ENCODE measurements at regions of chr5 and their contacts with region 1.

Region 1: DNA sequence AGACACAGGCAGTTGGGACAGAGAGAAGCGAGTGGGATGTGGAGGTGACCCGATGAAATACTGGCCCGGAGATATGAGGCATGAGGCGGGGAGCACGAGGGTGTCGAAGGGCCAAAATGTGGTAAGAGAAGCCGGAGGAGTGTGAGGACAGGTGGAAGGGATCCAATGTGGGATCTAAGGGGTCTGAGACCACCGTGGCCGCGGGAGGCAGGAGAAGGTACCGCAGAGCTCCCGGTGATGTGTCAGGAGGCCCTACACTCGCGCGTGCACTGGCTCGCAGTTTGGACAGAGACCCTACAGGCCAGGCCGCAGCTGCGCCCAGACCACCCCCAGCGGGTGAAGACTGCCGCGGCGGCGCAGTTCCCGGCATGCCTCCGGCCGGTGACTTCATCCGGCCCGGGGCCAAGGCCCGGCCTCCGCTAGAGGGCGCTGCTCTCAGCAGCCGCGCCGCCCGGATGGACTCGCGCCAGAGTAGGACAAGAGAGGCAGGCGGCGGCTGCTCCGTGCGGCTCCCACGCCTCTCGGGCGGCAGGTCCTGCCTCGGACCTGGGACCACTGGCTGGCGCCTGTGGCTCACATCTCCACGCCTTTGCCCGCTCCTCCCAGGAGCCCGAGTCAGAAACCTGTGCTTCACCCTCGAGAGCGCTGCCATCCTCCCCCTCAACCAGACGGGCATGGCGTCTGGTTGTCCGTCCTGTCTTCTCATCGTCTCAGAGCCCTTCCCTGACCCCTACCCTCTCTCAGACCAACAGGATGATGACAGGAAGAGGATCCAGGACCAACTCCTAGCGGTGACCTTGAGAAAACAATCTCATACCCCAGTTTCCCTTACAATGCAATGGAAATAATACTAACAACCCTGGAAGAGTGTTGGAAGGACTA is 35.4 kb upstream of the STING1 start:
- DNase-seq: no peak
- H3K4me3 ChIP-seq: peak overlapping the region; percentile 64
- CTCF ChIP-seq: peak; percentile 94

Region 2: DNA sequence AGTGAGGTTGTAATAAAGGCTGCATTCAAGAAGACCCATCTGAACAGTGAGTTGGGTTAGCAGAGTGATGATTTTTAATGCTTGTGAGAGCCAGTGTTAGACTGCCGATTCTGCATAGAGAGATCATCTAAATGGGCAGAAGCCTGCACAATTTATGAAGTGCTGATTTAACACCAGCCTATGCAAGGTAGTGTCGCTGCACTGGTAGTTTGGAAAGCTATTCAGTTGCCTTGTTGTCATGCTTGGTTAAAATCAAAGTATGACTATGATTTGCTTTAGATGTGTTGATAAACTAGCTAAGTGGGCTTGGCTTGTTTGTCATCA is 642.4 kb before region 1 on chr5:
- CTCF ChIA-PET with region 1: no interaction called
- POLR2A ChIA-PET with region 1: no interaction called
- DNase-seq: no peak
- H3K4me3 ChIP-seq: peak overlapping the region; percentile 53
- CTCF ChIP-seq: no peak

Region 3: GRCh38 chr5:139415221-139415861 is 102.6 kb before region 1 on chr5:
- CTCF ChIA-PET with region 1: interaction called, 730 read pairs
- POLR2A ChIA-PET with region 1: interaction called, 4 read pairs
- DNase-seq: no peak
- H3K4me3 ChIP-seq: no peak overlapping the region
- CTCF ChIP-seq: no peak

Region 4: GRCh38 chr5:139430015-139430414 is 87.9 kb before region 1 on chr5:
- CTCF ChIA-PET with region 1: interaction called, 730 read pairs
- POLR2A ChIA-PET with region 1: no interaction called
- DNase-seq: no peak
- H3K4me3 ChIP-seq: no peak overlapping the region
- CTCF ChIP-seq: no peak

Region 5: DNA sequence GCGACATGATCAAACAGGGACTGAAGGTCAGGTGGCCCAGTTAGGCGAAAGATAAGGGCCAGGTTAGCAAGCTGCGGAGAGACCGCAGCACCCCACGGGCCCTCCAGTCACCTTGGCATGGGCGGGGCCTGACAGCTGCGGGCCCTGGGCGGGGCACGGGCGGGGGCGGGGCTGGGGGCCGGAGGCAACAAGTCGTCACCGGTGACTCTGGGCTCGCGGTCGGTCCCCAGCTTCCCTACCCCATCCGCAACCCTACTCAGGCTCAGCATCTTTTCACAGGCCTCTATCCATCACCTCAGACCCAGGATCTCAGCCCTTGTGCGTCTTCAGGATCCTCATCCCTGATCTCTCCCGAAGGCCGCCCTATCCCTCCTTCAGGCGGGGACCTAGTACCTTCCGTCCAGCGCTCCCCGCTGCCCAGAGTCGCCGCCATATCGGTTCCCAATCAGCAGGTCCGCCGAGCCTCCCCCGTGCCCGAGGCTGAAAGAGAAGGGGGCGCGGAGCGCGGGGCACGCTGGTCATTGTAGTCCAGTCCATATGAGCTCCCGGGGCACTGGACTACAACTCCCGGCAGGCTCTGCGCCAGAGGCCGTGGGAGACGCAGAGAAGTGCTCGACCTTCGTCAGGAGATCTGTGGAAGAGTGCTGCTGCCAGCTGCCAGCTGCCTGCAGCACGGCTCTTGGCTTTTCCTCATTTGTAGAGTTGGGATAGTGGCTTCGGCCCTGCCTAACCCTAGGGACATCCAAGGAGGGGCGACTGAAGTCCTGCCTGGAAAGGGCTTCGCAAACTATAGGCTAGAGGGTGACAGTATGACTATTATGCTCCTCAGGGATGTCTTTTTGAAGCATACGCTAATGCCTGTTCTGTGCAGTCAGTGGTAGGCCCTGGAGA is 78.7 kb before region 1 on chr5 and contains the start of gene DNAJC18:
- CTCF ChIA-PET with region 1: interaction called, 87 read pairs
- POLR2A ChIA-PET with region 1: no interaction called
- DNase-seq: no peak
- H3K4me3 ChIP-seq: peak within 1 kb of the TSS; percentile 91
- CTCF ChIP-seq: no peak

Region 6: DNA sequence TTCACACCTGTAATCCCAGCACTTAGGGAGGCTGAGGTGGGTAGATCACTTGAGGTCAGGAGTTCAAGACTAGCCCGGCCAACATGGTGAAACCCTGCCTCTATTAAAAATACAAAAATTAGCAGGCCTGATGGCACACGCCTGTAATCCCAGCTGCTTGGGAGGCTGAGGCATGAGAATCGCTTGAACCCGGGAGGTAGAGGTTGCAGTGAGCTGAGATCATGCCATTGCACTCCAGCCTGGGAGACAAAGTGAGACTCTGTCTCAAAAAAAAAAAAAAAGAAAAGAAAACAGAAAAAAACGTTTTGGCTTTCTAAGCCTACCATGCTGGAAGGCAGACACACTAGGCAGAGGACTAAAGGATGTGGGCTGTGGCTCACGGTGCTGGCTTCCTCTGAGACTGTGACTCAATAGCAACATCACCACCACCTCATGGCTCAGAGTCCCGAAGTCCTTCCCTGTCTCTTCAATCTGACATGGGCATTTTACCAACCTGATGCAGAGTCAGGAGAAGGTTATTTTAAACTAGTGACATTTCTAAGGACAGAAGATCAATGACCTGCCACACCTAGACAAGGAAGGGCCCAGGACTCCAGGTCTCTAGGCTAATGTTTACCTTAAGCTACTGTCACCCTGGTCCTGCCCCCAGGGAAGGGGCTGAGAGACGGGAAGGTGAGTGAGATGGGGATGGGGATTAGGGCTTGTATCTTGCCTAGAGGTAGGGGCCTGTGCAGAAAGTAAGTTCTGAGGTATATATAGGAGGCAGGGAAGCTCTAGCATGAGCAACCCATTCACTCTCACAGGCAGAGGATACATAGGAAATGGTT is 59.1 kb before region 1 on chr5:
- CTCF ChIA-PET with region 1: interaction called, 10 read pairs
- POLR2A ChIA-PET with region 1: no interaction called
- DNase-seq: peak; percentile 24
- H3K4me3 ChIP-seq: no peak overlapping the region
- CTCF ChIP-seq: no peak

Region 7: DNA sequence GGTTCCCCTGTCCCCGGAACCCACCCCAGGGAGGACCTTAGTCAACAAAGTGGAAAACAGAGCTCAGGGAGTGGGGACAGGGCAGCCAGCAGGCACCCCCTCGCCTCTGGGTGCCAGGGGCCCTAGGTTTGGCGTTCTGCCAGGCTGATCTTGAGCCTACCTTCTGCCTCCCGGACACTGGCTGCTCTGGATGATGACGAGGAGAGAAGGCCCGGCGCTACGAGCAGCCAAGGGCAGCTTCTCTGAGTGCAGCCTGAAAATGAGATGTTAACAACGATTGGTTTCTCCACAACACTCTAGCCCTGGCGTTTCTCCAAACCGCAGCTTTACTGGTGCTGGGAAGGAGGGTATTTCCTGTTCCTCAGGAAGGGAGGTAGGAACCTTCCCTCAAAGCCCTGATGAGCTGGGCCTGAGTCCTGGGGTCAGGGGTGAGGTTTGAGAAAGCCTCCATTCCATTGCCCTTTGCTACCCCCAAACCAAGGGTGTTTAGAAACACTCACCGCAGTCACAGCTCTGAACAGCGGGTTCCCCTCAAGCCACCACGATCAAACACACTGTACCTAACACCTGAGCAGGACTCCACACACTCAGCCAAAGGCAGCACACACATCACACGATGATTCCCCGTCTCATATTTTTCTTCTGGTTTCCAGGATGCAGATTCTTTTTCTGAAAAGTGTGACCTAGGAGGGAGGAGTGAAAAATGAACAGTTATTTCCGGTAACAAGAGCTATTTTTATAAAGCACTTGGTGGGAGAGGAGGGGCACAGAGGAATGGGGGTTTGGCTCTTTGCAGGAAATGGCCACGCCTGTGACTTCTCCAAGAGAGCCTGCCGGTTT is 35.7 kb before region 1 on chr5 and contains the start of gene STING1:
- CTCF ChIA-PET with region 1: interaction called, 12 read pairs
- POLR2A ChIA-PET with region 1: interaction called, 4 read pairs
- DNase-seq: peak; percentile 87
- H3K4me3 ChIP-seq: peak within 1 kb of the TSS; percentile 71
- CTCF ChIP-seq: no peak

Region 8: DNA sequence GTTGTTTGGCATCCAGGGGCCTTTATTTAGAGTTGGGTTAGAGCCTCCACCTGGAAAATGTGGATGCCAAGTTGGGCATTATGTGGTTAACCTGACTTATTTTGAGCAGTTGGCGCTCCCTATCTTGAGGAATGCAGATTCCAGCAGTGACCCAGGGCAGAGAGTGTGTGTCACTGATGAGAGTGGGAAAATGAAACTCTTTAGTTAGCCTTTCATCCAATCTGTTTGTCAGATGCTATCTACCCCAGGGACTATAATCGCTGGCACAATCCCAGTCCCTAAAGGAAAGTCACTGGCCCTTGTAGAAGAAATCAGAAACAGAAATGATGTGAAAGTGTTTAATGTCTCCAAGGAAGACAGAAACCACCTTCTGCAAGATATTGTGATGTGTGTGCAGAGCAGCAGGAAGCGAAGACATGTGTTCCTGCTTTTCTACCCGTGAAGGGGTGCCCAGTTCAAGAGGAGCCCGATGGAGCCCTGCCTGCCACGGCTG is 25.2 kb before region 1 on chr5:
- CTCF ChIA-PET with region 1: interaction called, 186 read pairs
- POLR2A ChIA-PET with region 1: no interaction called
- DNase-seq: no peak
- H3K4me3 ChIP-seq: no peak overlapping the region
- CTCF ChIP-seq: no peak

Region 9: DNA sequence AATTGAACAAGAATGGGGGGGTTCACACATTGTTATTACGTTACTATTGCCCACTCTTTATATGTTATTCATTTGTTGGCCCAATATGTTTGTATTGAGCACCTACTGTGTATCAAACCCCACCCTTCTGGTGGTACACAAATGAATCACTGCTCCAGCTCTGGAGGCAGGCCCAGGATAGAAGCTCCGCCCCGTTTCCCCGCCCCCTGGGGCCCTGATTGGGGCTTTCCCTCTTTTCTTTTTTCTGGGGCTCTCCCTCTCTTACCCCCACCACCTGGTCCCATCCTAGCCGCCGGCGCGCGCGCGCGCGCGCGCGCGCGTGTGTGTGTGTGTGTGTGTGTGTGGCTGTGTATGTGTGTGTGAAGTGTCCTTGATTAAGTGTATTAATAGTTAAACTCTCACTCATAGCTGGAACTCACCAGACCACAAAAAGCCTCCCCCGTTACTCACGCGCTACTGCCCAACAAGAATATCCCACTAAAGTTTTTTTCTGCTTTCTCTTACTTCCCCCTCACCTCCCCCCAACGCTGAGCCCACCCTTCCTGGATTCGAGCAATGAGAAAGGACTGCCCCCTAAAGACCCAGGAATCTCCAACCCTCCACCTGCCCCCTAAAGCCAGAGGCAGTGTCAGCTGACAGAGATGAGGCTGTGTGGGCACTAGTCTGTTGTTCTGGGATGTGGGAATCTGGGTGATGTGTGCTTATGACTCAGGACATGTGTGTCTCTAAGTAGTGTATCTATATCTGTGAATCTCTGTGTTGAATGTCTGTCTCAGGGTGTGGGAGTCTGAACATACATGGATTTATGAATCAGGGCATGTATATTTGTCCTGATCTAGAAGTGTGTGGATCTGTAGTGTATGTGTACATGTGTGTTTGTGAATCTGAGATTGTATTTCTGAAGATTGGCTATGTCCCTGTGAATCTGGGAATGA is 134.2 kb after region 1 on chr5:
- CTCF ChIA-PET with region 1: no interaction called
- POLR2A ChIA-PET with region 1: no interaction called
- DNase-seq: no peak
- H3K4me3 ChIP-seq: peak overlapping the region; percentile 85
- CTCF ChIP-seq: no peak

Region 10: DNA sequence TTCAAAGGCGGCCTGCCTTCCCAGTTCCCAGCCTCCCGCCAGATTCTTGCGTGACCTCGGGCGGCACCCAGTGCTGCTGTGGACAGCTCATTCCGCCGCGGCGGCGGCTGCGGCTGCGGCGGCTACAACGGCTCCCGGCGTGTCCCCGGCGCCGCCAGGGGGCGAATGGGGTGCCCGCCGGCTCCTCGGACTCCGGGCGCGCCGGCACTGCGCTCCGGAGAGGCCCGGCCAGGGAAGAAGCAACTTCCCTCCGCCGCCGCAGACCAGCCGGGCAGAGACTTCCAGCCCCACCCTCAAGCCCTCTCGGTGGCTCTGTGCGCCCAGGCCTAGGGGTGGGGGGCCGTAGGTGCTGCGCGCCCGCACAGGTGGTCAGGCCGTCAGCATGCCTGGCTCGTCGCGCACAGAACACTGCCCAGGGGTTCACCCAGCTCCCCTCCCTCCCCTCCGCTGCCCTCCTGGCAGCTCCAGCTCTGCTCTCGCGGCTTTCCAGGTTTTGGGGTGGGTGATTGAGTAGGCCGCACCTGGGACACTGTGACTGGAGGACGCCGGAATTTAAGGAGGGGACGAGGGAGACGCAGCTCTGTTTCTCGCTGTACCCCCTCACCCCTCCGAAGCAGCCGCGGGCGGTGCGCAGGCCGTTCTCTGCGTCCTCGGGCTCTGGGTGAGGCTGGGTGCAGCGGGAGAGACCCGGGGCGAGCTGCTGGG is 628.0 kb after region 1 on chr5:
- CTCF ChIA-PET with region 1: no interaction called
- POLR2A ChIA-PET with region 1: no interaction called
- DNase-seq: no peak
- H3K4me3 ChIP-seq: peak overlapping the region; percentile 48
- CTCF ChIP-seq: peak; percentile 69

Measured in AG04449 (cell line).